Activated CD4-positive, alpha-beta memory T cell treated with anti-CD3 and anti-CD28 coated beads for 36 hours (primary cell): ENCODE measurements at regions of chr7 and their contacts with region 1.

Region 1: GRCh38 chr7:56074371-56074791 is 10.3 kb downstream of the SUMF2 start:
- DNase-seq: peak; percentile 77
- H3K4me3 Mint-ChIP-seq: no peak overlapping the region
- H3K27ac Mint-ChIP-seq: no peak overlapping the region
- H3K4me1 Mint-ChIP-seq: peaks cover 4% of the 10 kb centered on the region
- H3K27me3 Mint-ChIP-seq: no peaks in the 10 kb centered on the region

Region 2: GRCh38 chr7:55641273-55641691 is 433.1 kb before region 1 on chr7:
- CTCF ChIA-PET with region 1: interaction called, 26 read pairs
- POLR2A ChIA-PET with region 1: no interaction called
- intact Hi-C with region 1: loop called (anchors 1 kb)
- DNase-seq: peak; percentile 32
- H3K4me3 Mint-ChIP-seq: no peak overlapping the region
- H3K27ac Mint-ChIP-seq: peak overlapping the region; percentile 9
- H3K4me1 Mint-ChIP-seq: peaks cover 9% of the 10 kb centered on the region
- H3K27me3 Mint-ChIP-seq: peaks cover 1% of the 10 kb centered on the region

Region 3: DNA sequence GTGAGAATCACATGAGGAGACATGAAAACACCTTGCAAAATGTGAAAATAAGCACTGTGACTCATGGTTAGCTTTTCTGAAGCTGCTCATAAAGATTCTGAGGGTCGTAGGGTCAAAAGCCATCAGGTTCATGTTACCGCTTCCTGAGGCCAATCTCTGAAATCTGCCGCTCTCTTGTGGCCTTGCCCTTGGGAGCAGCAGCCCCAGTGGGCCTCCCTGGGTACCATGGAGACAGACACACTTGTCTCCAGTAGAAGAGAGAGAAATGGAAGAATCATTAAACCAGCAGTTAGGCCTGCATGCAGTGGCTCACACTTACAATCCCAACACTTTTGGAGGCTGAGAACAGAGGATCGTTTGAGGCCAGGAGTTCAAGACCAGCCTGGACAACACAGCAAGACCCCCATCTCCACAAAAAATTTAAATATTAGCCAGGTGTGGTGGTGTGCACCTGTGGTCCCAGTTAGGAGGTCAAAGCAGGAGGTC is 67.2 kb before region 1 on chr7:
- CTCF ChIA-PET with region 1: interaction called, 45 read pairs
- POLR2A ChIA-PET with region 1: interaction called, 5 read pairs
- intact Hi-C with region 1: loop called (anchors 1 kb)
- DNase-seq: peak; percentile 17
- H3K4me3 Mint-ChIP-seq: no peak overlapping the region
- H3K27ac Mint-ChIP-seq: no peak overlapping the region
- H3K4me1 Mint-ChIP-seq: no peaks in the 10 kb centered on the region
- H3K27me3 Mint-ChIP-seq: no peaks in the 10 kb centered on the region

Region 4: GRCh38 chr7:56051339-56052191 is 22.8 kb before region 1 on chr7 and contains the starts of genes CCT6A and PSPH:
- CTCF ChIA-PET with region 1: interaction called, 13 read pairs
- POLR2A ChIA-PET with region 1: interaction called, 3 read pairs
- intact Hi-C with region 1: no loop called
- DNase-seq: peak; percentile 94
- H3K4me3 Mint-ChIP-seq: peak within 1 kb of the TSS; percentile 95
- H3K27ac Mint-ChIP-seq: peak within 1 kb of the TSS; percentile 94
- H3K4me1 Mint-ChIP-seq: peaks cover 36% of the 10 kb centered on the region
- H3K27me3 Mint-ChIP-seq: no peaks in the 10 kb centered on the region
- total RNA-seq, gene CCT6A: 222 to 230 TPM
- total RNA-seq, gene PSPH: 16.3 to 20.9 TPM

Region 5: DNA sequence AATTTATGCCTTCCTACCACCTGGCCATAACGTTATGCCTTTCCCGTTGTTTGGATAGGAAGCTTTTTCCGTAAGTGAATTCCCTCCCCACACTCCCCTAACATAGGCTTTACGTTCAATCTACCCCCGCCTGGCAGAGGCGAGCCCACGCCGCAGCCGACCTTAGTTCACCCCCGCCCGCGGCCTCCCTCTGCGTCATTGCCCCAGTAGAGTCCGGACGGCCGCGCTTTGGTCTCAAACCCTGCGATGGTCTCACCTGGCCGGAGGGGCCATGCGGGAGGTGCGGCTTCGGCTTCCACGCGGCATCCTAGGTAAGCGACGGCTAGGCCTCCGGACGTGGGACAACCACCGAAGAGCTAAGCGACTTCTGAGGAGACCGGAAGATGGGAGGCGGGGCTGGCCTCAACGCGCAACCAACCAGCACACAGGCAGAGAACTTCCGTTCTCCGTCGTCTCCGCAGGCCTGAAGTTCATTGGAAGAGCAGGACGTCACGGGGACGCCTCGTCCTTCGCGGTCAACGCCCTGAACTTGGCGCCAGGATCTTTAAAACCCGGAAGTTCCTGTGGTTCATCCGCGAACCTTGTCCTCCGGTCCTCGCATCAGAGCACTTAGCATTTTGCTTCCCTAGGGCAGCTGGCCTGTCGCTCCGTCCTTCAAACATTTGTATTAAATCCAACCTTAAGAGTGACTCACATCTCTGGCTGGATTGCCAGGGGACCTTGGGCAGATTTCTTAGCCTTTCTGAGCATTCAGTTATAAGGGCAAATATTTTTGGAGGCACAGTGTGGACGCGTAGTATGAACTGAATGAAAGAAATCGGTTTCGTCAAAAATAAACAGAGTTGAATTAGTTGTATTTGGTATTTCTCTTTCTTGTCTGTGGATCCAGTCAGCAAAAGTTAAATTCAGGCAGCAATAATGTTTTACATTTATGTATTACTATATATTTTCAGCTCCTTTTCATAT is 32.0 kb after region 1 on chr7 and contains the start of gene CHCHD2:
- CTCF ChIA-PET with region 1: interaction called, 11 read pairs
- POLR2A ChIA-PET with region 1: interaction called, 5 read pairs
- intact Hi-C with region 1: no loop called
- DNase-seq: peak; percentile 97
- H3K4me3 Mint-ChIP-seq: peak within 1 kb of the TSS; percentile 97
- H3K27ac Mint-ChIP-seq: peak within 1 kb of the TSS; percentile 94
- H3K4me1 Mint-ChIP-seq: peaks cover 30% of the 10 kb centered on the region
- H3K27me3 Mint-ChIP-seq: no peaks in the 10 kb centered on the region
- total RNA-seq, gene CHCHD2: 764 to 766 TPM